Calu3 (cell line): ENCODE measurements at regions of chr7 and their contacts with region 1.

Region 1: GRCh38 chr7:82234457-82235049 is 209.0 kb downstream of the CACNA2D1 start:
- DNase-seq: peak; percentile 1
- H3K4me3 Mint-ChIP-seq: no peak overlapping the region
- H3K27ac Mint-ChIP-seq: no peak overlapping the region
- H3K4me1 Mint-ChIP-seq: no peaks in the 10 kb centered on the region
- H3K27me3 Mint-ChIP-seq: no peaks in the 10 kb centered on the region
- CTCF ChIP-seq: peak; percentile 29

Region 2: DNA sequence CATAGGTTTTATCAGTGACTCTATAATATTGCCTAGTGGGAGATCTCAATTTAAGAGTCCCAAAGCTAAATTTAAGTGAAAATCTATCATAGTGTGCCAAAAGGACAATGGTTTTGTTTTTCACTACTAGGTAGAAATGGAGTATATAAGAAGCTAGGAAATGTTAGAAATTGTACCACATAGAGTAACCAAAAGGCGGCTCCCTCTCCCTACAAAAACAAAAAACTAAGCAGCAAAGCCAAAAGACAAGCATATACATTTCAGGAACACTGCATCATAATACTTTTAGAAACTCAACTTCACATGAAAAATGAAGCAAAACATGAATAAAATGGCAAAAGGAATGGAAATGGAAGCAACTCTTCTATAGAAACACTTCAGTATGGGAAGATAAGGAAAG is 62.5 kb before region 1 on chr7:
- CTCF ChIA-PET with region 1: no interaction called
- intact Hi-C with region 1: no loop called
- DNase-seq: no peak
- H3K4me3 Mint-ChIP-seq: no peak overlapping the region
- H3K27ac Mint-ChIP-seq: no peak overlapping the region
- H3K4me1 Mint-ChIP-seq: no peaks in the 10 kb centered on the region
- H3K27me3 Mint-ChIP-seq: no peaks in the 10 kb centered on the region
- CTCF ChIP-seq: no peak

Region 3: DNA sequence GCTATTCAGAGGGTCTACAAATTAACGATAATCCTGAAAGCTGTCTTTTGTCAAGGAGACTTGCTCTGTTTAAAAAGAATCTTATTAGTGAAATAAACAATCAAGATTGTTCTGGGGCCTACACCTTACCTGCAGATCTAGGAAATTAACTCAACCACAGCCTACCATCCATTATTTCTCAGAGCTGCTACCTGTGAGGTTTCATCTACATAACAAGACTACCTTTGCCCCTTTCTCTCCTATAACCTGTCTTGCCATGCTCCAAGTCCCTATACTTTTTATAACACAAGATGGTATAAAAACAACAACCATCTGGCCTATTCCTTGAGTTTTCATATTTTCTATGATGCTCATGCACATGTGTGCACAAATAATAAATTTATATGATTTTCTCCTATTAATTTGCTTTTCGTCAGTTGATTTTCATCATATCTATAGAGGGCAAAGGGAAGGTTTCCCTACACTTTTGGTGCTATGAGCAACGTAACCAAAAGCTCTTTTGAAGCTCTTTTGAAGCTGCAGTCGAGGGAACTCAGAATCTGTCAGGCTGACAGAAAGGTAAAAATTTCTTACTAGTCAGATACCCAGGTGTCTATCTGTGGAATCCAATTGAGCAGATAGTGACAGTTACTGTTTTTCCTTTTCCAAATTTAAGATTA is 70.9 kb after region 1 on chr7:
- CTCF ChIA-PET with region 1: no interaction called
- intact Hi-C with region 1: no loop called
- DNase-seq: no peak
- H3K4me3 Mint-ChIP-seq: no peak overlapping the region
- H3K27ac Mint-ChIP-seq: no peak overlapping the region
- H3K4me1 Mint-ChIP-seq: no peaks in the 10 kb centered on the region
- H3K27me3 Mint-ChIP-seq: no peaks in the 10 kb centered on the region
- CTCF ChIP-seq: no peak

Region 4: GRCh38 chr7:82359426-82359825 is 124.9 kb after region 1 on chr7:
- CTCF ChIA-PET with region 1: no interaction called
- intact Hi-C with region 1: loop called (anchors 10 kb)
- DNase-seq: no peak
- H3K4me3 Mint-ChIP-seq: no peak overlapping the region
- H3K27ac Mint-ChIP-seq: no peak overlapping the region
- H3K4me1 Mint-ChIP-seq: no peaks in the 10 kb centered on the region
- H3K27me3 Mint-ChIP-seq: no peaks in the 10 kb centered on the region
- CTCF ChIP-seq: no peak

Region 5: DNA sequence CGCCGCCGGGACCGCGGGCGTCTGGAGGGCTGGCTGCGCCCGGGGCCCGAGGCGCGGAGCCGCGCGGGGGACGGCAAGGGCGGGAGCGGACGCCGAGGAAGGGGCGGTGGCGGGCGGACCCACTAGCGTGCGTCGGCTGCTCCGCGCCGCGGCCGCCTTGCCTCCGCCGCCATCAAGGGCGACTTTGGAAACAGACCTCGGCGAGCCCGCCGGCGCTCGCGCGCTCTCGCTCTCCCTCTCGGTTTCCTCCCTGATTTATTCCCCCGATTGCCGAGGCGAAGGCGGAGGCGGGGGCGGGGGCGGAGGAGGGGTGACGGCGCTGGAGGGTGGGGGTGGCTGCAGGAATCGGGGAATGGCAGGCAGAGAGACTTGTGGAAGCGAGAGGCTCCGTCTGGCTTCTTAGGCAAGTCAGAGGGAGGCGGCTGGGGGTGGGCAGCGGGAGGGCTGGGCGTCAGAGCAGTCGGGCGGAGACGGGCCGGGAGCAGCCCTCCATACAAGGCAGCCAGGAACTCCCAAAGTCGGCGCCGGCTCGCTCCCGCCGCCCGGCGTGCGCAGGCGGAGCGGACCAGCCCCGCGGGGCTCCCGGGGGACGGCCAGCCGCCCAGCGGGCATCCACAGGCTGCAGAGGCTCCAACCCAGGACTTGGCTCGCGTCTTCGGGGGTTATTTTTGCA is 209.1 kb after region 1 on chr7 and contains the start of gene CACNA2D1:
- CTCF ChIA-PET with region 1: no interaction called
- intact Hi-C with region 1: loop called (anchors 5 kb)
- DNase-seq: peak; percentile 44
- H3K4me3 Mint-ChIP-seq: peak within 1 kb of the TSS; percentile 88
- H3K27ac Mint-ChIP-seq: peak within 1 kb of the TSS; percentile 70
- H3K4me1 Mint-ChIP-seq: no peaks in the 10 kb centered on the region
- H3K27me3 Mint-ChIP-seq: no peaks in the 10 kb centered on the region
- CTCF ChIP-seq: no peak
- total RNA-seq, gene CACNA2D1: 10.1 and 10.4 TPM in 2 replicates

Region 6: GRCh38 chr7:82481499-82482097 is 247.0 kb after region 1 on chr7:
- CTCF ChIA-PET with region 1: interaction called, 5 read pairs
- intact Hi-C with region 1: loop called (anchors 2 kb)
- DNase-seq: no peak
- H3K4me3 Mint-ChIP-seq: no peak overlapping the region
- H3K27ac Mint-ChIP-seq: no peak overlapping the region
- H3K4me1 Mint-ChIP-seq: no peaks in the 10 kb centered on the region
- H3K27me3 Mint-ChIP-seq: no peaks in the 10 kb centered on the region
- CTCF ChIP-seq: peak; percentile 37

Region 7: DNA sequence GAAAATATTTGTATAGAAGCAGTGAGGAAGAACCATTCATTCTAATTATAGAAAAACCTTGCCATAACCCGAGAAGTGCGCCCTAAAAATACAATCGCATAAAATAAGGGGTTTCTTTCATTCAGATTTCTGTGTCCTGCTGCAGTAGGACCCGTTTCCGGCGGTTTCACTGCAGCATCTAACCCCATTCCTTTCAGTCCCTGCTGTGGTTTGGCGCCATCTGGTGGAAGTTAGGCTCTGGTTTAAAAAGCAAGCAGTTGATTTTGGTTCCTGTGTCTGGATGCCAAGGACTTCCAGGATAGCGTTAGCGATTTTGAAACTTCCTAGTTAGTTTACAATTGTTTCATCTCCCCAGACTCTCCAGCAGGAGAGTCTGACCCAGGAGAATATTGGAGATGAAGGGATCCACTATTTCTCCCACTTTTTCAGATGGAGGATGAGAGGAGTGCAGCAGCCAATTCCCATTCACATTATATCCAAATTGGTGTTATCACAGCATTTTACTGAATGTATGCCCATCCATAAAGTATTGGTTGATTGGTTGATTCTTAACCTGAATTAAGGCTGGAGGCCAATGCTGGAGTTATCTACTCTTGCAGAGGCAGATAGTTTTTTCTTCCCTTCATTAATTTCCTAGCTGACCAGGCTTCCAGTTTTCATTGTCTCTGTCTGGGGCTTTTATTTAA is 337.8 kb after region 1 on chr7:
- CTCF ChIA-PET with region 1: no interaction called
- intact Hi-C with region 1: loop called (anchors 1 kb)
- DNase-seq: peak; percentile 76
- H3K4me3 Mint-ChIP-seq: no peak overlapping the region
- H3K27ac Mint-ChIP-seq: no peak overlapping the region
- H3K4me1 Mint-ChIP-seq: no peaks in the 10 kb centered on the region
- H3K27me3 Mint-ChIP-seq: no peaks in the 10 kb centered on the region
- CTCF ChIP-seq: peak; percentile 60

Region 8: GRCh38 chr7:82605247-82605872 is 370.8 kb after region 1 on chr7:
- CTCF ChIA-PET with region 1: interaction called, 10 read pairs
- intact Hi-C with region 1: loop called (anchors 1 kb)
- DNase-seq: peak; percentile 29
- H3K4me3 Mint-ChIP-seq: no peak overlapping the region
- H3K27ac Mint-ChIP-seq: no peak overlapping the region
- H3K4me1 Mint-ChIP-seq: no peaks in the 10 kb centered on the region
- H3K27me3 Mint-ChIP-seq: no peaks in the 10 kb centered on the region
- CTCF ChIP-seq: no peak

Region 9: DNA sequence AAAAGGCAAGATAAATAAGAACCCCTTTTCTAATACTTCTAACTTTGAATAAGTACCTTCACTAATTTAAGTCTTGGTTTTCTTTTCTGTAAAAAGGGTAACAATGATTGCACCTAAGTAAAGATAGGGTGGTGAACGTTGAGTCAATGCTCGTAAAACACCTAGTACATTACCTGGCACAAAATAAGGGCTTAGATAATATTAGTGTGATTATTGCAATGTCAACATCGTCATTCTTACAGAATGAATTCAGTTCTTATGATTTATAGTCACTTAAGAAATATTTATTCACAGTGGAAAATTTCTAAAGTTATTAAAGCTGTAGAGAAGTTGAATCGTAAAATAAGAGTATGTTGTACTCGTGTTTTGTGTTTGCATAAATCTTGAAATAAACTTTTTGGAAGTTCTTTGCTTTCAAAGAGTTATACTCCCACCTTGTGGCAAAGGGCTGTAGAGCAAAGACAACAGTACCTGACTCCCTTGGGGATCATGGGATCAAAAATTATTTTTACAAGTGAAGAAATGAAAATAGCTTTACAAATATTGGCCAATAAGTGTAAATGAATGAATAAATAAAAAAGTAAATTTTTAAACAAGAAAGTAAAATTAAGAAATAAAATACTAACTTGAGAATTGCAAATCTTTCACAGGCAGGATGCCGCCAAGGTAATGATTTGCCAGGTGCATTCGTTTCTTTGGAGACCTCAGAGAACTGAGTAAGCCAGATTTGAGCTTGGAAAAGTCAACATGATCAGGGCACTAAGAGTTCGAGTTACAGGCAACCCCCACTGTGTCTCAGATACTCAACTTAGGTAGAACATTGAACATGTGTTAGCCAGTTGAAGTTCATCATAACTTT is 494.8 kb after region 1 on chr7:
- CTCF ChIA-PET with region 1: no interaction called
- intact Hi-C with region 1: loop called (anchors 5 kb)
- DNase-seq: peak; percentile 35
- H3K4me3 Mint-ChIP-seq: no peak overlapping the region
- H3K27ac Mint-ChIP-seq: no peak overlapping the region
- H3K4me1 Mint-ChIP-seq: no peaks in the 10 kb centered on the region
- H3K27me3 Mint-ChIP-seq: no peaks in the 10 kb centered on the region
- CTCF ChIP-seq: peak; percentile 33